Ovary (tissue), 10 donors: ENCODE measurements at regions of chr3 and their contacts with region 1.

Region 1: DNA sequence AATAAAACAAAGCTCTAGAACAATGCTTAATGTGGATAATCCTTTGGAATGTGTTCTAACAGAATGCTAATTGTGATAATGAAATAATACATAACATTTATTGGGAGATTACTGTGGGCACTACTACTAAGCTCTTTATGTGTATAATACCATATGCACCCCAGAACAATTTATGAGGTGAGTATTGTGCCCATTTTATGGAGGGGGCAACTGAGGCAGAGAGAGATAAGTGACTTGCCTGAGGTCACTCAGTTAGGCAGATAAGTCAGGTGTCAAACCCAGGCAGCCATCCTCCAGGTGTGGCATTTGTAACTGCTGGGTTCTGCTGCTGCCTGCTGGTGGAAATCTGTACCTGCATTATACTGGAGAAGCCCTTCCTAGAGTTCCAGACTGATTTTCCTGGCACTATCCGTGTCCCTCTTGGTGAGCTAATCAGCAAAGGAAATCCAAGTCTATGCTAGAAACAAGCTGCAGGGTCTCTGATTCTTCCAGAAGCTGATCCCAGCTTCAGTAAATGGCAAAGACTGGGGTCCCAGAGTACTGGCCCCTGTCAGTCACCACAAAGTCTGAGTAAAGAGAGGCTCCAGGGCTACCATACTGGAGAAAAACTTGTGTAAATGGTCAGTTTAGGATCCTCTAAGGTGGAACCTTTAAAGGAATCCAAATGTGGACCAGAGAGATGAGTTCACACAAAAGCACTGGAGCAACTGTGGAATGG is 22.6 kb upstream of the RBP1 start:
- DNase-seq: peak in 4 of 5 donors; percentile 46 to 65 (median 54)
- H3K4me3 ChIP-seq: no peak overlapping the region
- H3K27ac ChIP-seq: no peak overlapping the region
- H3K4me1 ChIP-seq: no peaks in the 10 kb centered on the region
- H3K27me3 ChIP-seq: no peaks in the 10 kb centered on the region
- CTCF ChIP-seq: peak; percentile 33 to 83 (median 80)
- EP300 ChIP-seq: no peak
- POLR2A ChIP-seq: no peak

Region 2: GRCh38 chr3:139288266-139288821 is 273.8 kb before region 1 on chr3:
- intact Hi-C with region 1: no loop called
- DNase-seq: peak in 3 of 5 donors; percentile 54 to 69 (median 67)
- H3K4me3 ChIP-seq: no peak overlapping the region
- H3K27ac ChIP-seq: peak overlapping the region in 1 of 2 donors; percentile 8
- H3K4me1 ChIP-seq: peaks cover 26% of the 10 kb centered on the region
- H3K27me3 ChIP-seq: no peaks in the 10 kb centered on the region
- CTCF ChIP-seq: no peak
- EP300 ChIP-seq: no peak
- POLR2A ChIP-seq: no peak

Region 3: DNA sequence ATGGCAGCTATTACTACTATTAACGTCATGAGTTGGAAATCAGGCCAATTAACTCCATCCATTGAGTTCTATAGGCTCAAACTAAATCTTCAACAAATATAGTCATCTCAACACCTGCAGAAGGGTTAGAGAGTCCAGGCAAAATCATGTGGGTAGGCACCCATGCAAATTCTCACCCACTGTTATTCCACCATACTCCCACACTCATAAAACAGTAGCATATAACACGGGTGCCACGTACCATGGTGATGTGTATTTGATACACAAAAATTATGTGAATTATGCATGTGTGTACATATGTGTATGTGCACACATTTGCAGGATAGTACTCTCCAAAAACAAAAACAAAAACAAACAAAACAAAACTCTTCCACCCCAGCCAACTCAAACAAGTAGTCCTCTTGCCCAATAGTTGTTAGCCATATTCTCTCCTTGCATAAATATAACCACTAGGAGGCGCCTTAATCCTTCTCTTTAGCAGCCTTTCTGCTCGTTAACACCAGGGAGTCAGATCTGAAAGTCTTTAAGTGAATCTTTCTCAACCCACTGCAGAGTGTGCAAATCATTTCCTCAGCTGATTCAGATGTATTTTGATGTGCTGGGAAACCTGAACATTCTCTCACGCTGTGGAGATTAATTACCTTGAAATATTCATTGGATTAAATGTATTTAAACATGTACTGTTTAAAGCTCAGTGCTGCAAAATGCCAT is 134.7 kb before region 1 on chr3:
- intact Hi-C with region 1: loop called (anchors 2 to 5 kb)
- DNase-seq: peak in 1 of 5 donors; percentile 28
- H3K4me3 ChIP-seq: no peak overlapping the region
- H3K27ac ChIP-seq: no peak overlapping the region
- H3K4me1 ChIP-seq: peaks cover 1% of the 10 kb centered on the region
- H3K27me3 ChIP-seq: no peaks in the 10 kb centered on the region
- CTCF ChIP-seq: peak; percentile 69 to 87 (median 84)
- EP300 ChIP-seq: no peak
- POLR2A ChIP-seq: no peak

Region 4: GRCh38 chr3:139620438-139620837 is 58.3 kb after region 1 on chr3:
- intact Hi-C with region 1: no loop called
- DNase-seq: no peak
- H3K4me3 ChIP-seq: no peak overlapping the region
- H3K27ac ChIP-seq: no peak overlapping the region
- H3K4me1 ChIP-seq: no peaks in the 10 kb centered on the region
- H3K27me3 ChIP-seq: no peaks in the 10 kb centered on the region
- CTCF ChIP-seq: no peak
- EP300 ChIP-seq: no peak
- POLR2A ChIP-seq: no peak

Region 5: GRCh38 chr3:139677388-139678155 is 115.5 kb after region 1 on chr3 and contains the start of gene NMNAT3:
- intact Hi-C with region 1: loop called in 1 of 4 experiments (anchors 10 kb)
- DNase-seq: peak; percentile 86 to 92 (median 89)
- H3K4me3 ChIP-seq: peak within 1 kb of the TSS; percentile 84
- H3K27ac ChIP-seq: peak within 1 kb of the TSS; percentile 7 to 51
- H3K4me1 ChIP-seq: peaks cover 2% of the 10 kb centered on the region
- H3K27me3 ChIP-seq: no peaks in the 10 kb centered on the region
- CTCF ChIP-seq: no peak
- EP300 ChIP-seq: no peak
- POLR2A ChIP-seq: no peak
- total RNA-seq, gene NMNAT3: 19.0 to 31.2 (median 23.6) TPM